ENCODE measurements at regions of chr19 and their contacts with region 1.

Region 1: GRCh38 chr19:13861732-13862531 is 15.0 kb upstream of the NANOS3 start:
- DNase-seq: peak; percentile 87 to 91
- ATAC-seq: peak; percentile 95 to 97
- H3K4me3 ChIP-seq: peak overlapping the region; percentile 47 to 69 (median 62)
- H3K27ac ChIP-seq: peak overlapping the region; percentile 80 to 87 (median 86)
- H3K4me1 ChIP-seq: peaks cover 7 to 18% of the 10 kb centered on the region in 2 donors
- H3K27me3 ChIP-seq: peaks cover 5 to 9% (median 9%) of the 10 kb centered on the region in 3 donors
- CTCF ChIP-seq: peak; percentile 97 to 99 (median 98)
- POLR2A ChIP-seq: peak; percentile 15 to 44

Region 2: GRCh38 chr19:13597640-13598039 is 264.3 kb before region 1 on chr19:
- in situ Hi-C with region 1: loop called in 2 of 4 experiments (anchors 10 to 25 kb)
- intact Hi-C with region 1: no loop called
- DNase-seq: peak in 1 of 2 donors; percentile 2
- ATAC-seq: no peak
- H3K4me3 ChIP-seq: no peak overlapping the region
- H3K27ac ChIP-seq: no peak overlapping the region
- H3K4me1 ChIP-seq: no peaks in the 10 kb centered on the region
- H3K27me3 ChIP-seq: no peaks in the 10 kb centered on the region
- CTCF ChIP-seq: peak; percentile 16 to 51 (median 41)
- POLR2A ChIP-seq: no peak

Region 3: GRCh38 chr19:13731147-13731964 is 130.6 kb before region 1 on chr19:
- in situ Hi-C with region 1: no loop called
- intact Hi-C with region 1: loop called (anchors 2 kb)
- DNase-seq: peak; percentile 84 to 90
- ATAC-seq: peak; percentile 97 to 98
- H3K4me3 ChIP-seq: peak overlapping the region; percentile 61 to 78 (median 66)
- H3K27ac ChIP-seq: peak overlapping the region; percentile 67 to 87 (median 76)
- H3K4me1 ChIP-seq: peaks cover 10% of the 10 kb centered on the region in 2 donors
- H3K27me3 ChIP-seq: no peaks in the 10 kb centered on the region
- CTCF ChIP-seq: no peak
- POLR2A ChIP-seq: no peak

Region 4: DNA sequence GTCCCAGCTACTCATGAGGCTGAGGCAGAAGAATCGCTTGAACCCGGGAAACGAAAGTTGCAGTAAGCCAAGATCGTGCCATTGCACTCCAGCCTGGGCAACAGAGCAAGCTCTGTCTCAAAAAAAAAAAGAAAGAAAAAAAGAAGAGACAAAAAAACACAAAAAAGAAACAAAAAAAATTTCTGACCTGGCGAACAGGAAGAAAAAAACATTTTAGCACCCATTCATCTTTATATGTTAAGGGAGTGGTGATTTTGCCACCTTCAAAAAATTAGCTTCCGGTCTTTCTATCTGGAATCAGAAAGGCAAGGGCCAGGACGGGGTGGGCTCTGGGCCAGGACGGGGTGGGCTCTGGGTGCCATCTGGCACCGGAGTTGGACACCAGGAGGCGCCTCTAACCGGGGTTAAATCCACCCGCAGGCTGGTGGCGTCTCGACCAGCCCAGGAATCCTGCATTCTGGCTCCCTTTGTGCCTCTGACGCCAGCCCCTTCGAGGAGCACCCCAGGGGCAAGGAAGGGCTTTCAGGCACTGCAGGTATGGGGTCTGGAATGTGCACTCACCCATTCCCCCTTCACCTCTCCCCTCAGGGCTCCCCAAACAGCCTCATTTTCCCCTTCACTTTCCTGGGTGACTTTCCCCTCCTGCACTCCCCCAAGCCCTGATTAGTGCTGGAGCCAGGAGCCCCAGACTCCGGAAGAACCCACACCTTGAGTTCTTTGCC is 77.0 kb before region 1 on chr19:
- in situ Hi-C with region 1: loop called (anchors 5 to 10 kb)
- intact Hi-C with region 1: loop called (anchors 1 kb)
- DNase-seq: peak; percentile 36 to 62
- ATAC-seq: peak; percentile 72 to 74
- H3K4me3 ChIP-seq: peak overlapping the region; percentile 10 to 39 (median 33)
- H3K27ac ChIP-seq: no peak overlapping the region
- H3K4me1 ChIP-seq: peaks cover 12 to 14% of the 10 kb centered on the region in 2 donors
- H3K27me3 ChIP-seq: peaks cover 0 to 19% (median 8%) of the 10 kb centered on the region in 3 donors
- CTCF ChIP-seq: peak; percentile 56 to 80 (median 74)
- POLR2A ChIP-seq: no peak

Region 5: GRCh38 chr19:13833330-13834243 is 28.3 kb before region 1 on chr19:
- in situ Hi-C with region 1: no loop called
- intact Hi-C with region 1: no loop called
- DNase-seq: peak; percentile 91 to 96
- ATAC-seq: peak; percentile 75 to 81
- H3K4me3 ChIP-seq: peak overlapping the region; percentile 14 to 40 (median 19)
- H3K27ac ChIP-seq: peak overlapping the region; percentile 96 to 100 (median 98)
- H3K4me1 ChIP-seq: peaks cover 43 to 55% of the 10 kb centered on the region in 2 donors
- H3K27me3 ChIP-seq: no peaks in the 10 kb centered on the region
- CTCF ChIP-seq: peak; percentile 39 to 62 (median 45)
- POLR2A ChIP-seq: peak in 1 of 2 donors; percentile 41

Measured in gastrocnemius medialis (tissue), 4 donors.